A549 (cell line): ENCODE measurements at regions of chr12 and their contacts with region 1.

Region 1: DNA sequence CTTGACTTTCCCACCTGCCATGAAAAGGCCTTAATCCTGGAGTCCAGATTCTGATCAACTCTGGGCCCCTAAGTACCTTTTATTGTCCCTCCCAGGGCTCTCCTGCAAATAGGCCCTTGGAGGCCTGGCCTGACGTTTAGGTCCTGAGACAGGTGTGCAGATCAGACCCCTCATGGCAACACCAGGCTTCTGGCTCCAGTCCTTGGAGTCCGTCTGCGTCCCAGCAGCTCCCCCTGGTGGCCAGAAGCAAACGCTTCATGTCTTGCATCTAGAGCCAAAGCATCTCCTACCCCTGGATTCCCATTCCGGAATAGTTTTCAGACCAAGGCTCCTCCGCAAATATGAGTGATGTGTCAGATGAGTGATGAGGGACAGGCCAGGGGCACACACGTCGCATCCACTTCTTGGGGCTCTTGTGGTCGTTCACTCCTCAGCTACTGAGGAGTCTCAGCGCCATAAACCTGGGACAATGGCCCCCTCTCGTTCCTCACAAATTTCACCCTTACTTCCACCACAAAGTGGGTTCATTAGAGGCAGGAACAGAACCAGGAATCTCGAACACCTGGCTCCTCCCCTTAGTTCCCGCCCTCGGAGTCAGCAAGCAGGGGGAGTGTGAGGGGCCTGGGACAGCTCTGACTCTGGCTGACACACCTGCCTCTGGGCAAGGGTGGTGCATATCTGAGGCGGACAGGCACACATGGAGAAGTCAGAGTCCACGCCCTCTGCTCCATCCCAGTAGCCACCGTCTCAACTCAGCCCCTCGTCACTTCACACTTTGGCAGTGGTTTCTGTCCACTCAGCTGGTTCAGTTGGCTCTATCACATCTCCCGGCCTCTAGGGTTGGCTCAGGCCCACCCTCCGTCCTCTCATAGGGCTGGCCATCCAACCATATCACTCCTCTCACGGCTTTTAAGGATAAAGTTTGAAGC is 77.9 kb upstream of the PWP1 start:
- DNase-seq: peak; percentile 83 to 86
- ATAC-seq: peak; percentile 78 to 95
- H3K4me3 ChIP-seq: no peak overlapping the region
- H3K27ac ChIP-seq: peak overlapping the region; percentile 6 to 18; a peak in 1 of 6 replicates
- H3K4me1 ChIP-seq: no peaks in the 10 kb centered on the region
- CTCF ChIP-seq: peak; percentile 90
- EP300 ChIP-seq: no peak
- POLR2A ChIP-seq: no peak
- RAD21 ChIP-seq: peak; percentile 95 to 96

Region 2: DNA sequence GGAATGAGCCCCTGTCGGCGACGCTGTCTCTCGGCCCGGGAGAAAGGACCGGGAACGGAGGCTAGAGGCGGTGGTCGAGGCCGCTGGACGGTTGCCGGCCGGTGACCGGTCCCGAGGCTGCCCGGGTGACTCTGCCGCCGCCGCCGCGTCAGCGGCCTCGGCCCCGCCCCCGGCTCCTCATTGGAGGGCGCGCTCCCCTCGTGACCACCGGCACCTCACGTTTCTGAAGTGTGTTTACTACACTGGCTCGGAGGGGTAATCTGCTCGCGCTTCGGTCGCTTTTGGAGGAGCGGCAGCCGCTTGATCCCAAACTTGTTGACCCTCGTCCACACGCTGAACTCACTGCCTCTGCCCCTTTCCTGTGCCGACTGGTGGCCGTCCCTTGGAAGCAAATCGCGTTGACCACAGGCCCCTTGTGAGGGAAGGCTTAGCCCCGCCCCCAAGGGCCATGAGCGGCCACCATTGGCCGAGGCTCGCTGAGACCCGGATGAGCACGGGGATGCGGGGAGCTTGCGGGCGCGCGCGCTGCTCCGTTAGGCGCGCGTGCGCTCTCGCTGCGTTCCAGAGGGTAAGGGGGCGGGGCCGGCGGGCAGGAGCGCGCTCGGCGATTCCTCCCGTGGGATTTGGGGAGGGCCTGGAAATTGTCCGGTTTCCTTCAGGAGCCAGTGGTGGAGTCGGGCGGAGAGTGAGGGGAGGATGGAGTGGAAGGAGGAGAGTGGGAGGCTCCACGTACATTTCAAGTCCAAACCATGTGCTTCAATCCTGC is 514.1 kb before region 1 on chr12 and contains the start of gene CRY1:
- CTCF ChIA-PET with region 1: interaction called, 28 read pairs
- POLR2A ChIA-PET with region 1: no interaction called
- DNase-seq: peak; percentile 79 to 98
- ATAC-seq: peak; percentile 84 to 88
- H3K4me3 ChIP-seq: peak within 1 kb of the TSS; percentile 73
- H3K27ac ChIP-seq: peak within 1 kb of the TSS; percentile 74 to 89
- H3K4me1 ChIP-seq: peaks cover 17% of the 10 kb centered on the region
- CTCF ChIP-seq: no peak
- EP300 ChIP-seq: no peak
- POLR2A ChIP-seq: peak; percentile 59
- RAD21 ChIP-seq: no peak
- polyA plus RNA-seq, gene CRY1: 17.6 and 26.1 TPM in 2 replicates

Region 3: GRCh38 chr12:107145397-107145796 is 462.3 kb before region 1 on chr12:
- CTCF ChIA-PET with region 1: interaction called, 19 read pairs
- POLR2A ChIA-PET with region 1: no interaction called
- DNase-seq: peak in 1 of 2 experiments; percentile 24
- ATAC-seq: peak in 1 of 2 experiments; percentile 61; a peak in 2 of 6 replicates
- H3K4me3 ChIP-seq: no peak overlapping the region
- H3K27ac ChIP-seq: no peak overlapping the region
- H3K4me1 ChIP-seq: peaks cover 14% of the 10 kb centered on the region
- CTCF ChIP-seq: no peak
- EP300 ChIP-seq: no peak
- POLR2A ChIP-seq: no peak
- RAD21 ChIP-seq: no peak

Region 4: DNA sequence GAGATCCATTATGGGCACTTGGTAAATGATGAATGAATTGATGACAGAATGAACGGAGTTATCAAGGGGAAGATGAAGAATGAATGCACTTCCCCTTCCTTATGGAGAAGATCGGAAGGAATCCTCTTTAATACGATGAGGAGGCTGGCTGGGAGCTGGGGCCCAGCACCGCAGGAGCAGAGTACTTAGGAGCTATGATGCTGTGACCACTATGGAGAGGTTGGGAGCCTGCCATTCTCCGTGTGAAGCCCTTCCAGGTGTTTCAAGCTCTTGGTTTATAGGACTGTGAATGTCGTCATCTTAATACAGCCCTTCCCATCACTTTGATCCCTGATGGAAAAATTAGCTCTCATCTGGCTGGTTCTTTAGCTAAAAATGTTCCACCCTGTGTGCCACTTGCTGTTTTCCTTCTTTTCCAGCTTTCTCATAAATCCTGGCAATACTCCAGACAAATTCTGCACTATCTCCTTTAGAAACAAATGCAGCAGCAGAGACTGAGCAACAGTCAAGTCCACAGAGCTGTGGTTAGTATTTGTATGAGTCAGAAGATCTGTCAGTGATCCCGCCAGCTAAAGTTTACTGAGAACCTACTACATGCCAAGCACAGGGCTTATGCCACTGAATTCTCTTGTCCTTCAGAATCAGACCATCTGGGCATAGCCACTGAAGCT is 251.3 kb before region 1 on chr12:
- CTCF ChIA-PET with region 1: interaction called, 10 read pairs
- POLR2A ChIA-PET with region 1: no interaction called
- DNase-seq: peak in 1 of 2 experiments; percentile 64
- ATAC-seq: peak; percentile 46 to 73; a peak in 5 of 6 replicates
- H3K4me3 ChIP-seq: no peak overlapping the region
- H3K27ac ChIP-seq: peak overlapping the region; percentile 94 to 96
- H3K4me1 ChIP-seq: peaks cover 83% of the 10 kb centered on the region
- CTCF ChIP-seq: no peak
- EP300 ChIP-seq: no peak
- POLR2A ChIP-seq: no peak
- RAD21 ChIP-seq: no peak

Region 5: GRCh38 chr12:107485371-107486130 is 122.2 kb before region 1 on chr12:
- CTCF ChIA-PET with region 1: no interaction called
- POLR2A ChIA-PET with region 1: no interaction called
- DNase-seq: peak in 1 of 2 experiments; percentile 28
- ATAC-seq: peak in 1 of 2 experiments; percentile 28; a peak in 3 of 6 replicates
- H3K4me3 ChIP-seq: no peak overlapping the region
- H3K27ac ChIP-seq: 0 out of 6 replicates have a peak overlapping the region, but pooled peaks have one; percentile 6 to 31
- H3K4me1 ChIP-seq: peaks cover 53% of the 10 kb centered on the region
- CTCF ChIP-seq: no peak
- EP300 ChIP-seq: no peak
- POLR2A ChIP-seq: no peak
- RAD21 ChIP-seq: no peak

Region 6: DNA sequence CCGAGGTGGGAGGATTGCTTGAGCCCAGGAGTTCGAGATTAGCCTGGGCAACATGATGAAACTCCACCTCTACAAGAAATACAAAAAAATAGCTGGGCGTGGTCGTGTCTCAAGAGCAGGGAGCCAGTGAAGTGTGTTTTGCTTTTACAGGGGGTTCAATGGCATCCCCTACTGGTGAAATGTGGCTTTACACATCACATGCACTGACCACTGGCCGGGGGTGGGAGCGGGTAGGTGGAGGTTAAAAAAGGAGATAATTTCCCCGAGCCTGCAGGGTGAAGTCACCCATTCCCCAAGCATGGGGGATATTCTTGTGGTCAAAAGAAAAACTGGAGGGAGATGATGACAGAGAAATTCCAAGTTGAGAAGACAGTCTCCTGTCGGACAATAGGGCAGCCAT is 14.3 kb after region 1 on chr12:
- CTCF ChIA-PET with region 1: interaction called, 104 read pairs
- POLR2A ChIA-PET with region 1: no interaction called
- DNase-seq: peak in 1 of 2 experiments; percentile 47
- ATAC-seq: peak in 1 of 2 experiments; percentile 49; a peak in 1 of 6 replicates
- H3K4me3 ChIP-seq: no peak overlapping the region
- H3K27ac ChIP-seq: no peak overlapping the region
- H3K4me1 ChIP-seq: no peaks in the 10 kb centered on the region
- CTCF ChIP-seq: peak; percentile 48
- EP300 ChIP-seq: no peak
- POLR2A ChIP-seq: no peak
- RAD21 ChIP-seq: peak; percentile 38 to 43; a peak in 4 of 5 replicates